AG04450 (cell line): ENCODE measurements at regions of chr17 and their contacts with region 1.

Region 1: DNA sequence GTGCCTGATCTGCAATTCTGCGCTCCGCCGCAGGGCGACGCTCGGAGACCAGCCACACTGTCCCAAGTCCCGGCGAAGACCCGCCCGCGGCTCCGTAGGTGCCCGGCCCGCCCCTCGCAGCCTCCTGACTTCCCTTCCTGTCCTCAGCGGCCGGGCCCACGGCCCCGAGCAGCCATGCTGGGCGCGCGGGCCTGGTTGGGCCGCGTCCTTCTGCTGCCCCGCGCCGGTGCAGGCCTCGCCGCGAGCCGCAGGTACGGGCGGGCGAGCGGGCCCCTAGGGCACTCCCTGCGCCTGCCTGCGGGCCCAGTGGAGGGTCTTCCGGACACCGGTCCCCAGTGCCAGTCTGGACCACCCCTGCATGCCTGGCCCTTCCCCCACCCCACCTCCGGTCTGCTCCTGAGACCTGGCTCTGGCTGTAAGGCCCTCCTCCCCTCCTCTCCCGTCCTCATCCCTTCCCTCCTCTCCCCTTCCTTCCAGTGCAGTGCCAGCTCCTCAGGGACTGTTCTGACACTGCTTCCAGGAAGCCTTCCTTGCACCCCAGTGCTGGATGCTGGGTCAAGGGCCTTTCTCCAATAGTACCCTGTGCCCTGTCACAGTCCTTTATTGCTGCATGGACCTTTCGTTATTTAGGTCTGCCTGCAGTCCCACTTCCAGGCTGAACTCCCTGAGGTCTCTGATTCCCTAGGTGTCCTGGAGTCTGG is at the start of gene SPATA20:
- DNase-seq: peak; percentile 63
- H3K4me3 ChIP-seq: peak within 1 kb of the TSS; percentile 73
- H3K27ac ChIP-seq: no peak within 1 kb of the TSS
- H3K27me3 ChIP-seq: no peaks in the 10 kb centered on the region
- CTCF ChIP-seq: peak; percentile 95
- polyA plus RNA-seq, gene SPATA20: 17.1 and 25.1 TPM in 2 replicates

Region 2: GRCh38 chr17:50560185-50560824 is 13.1 kb after region 1 on chr17 and contains the start of gene CACNA1G:
- CTCF ChIA-PET with region 1: interaction called, 19 read pairs
- POLR2A ChIA-PET with region 1: interaction called, 6 read pairs
- DNase-seq: peak; percentile 26
- H3K4me3 ChIP-seq: peak within 1 kb of the TSS; percentile 47
- H3K27ac ChIP-seq: no peak within 1 kb of the TSS
- H3K27me3 ChIP-seq: peaks cover 64% of the 10 kb centered on the region
- CTCF ChIP-seq: no peak
- polyA plus RNA-seq, gene CACNA1G: 0.05 TPM in 1 of 2 replicates, not detected in the other

Region 3: DNA sequence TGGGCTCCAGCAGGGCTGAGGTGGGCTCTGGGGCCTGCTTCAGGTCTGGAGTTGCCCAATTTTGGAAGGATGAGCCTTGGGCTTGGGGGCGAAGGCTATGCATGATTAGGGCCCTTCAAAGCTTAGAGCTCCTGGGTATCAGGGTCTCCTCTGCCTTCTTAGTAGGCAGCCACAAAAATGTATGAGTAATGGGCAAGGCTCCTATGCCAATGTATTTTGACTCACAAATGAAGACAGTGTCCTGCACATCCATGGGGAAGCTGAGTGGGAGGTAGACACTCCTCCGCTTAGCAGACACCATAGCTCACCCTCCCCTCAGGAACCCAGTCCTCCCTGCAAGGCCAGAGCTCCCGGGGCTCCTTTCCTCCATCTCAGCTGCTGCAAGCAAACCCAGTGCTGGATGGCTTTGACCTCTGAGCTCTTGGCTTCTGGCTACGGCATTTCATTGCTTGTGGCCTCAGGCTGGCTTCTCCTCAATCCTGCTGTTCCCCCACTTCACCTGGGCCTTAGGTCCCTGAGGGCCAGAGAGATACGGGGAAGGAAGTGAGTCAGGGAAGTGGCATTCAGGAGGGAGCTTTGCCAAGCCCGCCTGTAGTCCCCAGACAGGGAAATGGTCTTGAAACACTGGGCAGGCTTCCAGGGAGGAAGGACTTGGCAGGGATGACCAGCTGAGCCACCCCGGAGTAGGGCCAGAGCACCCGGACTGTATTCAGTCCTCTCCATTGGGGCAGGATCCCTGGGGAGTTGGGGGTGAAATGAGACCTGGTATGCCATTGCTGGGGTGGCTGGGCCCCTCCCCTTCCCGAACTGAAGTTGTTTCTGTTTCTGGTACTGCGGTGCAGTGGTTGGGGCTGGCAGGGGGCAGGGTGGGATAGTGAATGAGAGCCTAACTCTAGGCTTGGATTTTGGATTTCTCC is 91.9 kb after region 1 on chr17:
- CTCF ChIA-PET with region 1: interaction called, 15 read pairs
- POLR2A ChIA-PET with region 1: interaction called, 4 read pairs
- DNase-seq: peak; percentile 89
- H3K4me3 ChIP-seq: 0 out of 2 replicates have a peak overlapping the region, but pooled peaks have one; percentile 13
- H3K27ac ChIP-seq: peak overlapping the region; percentile 92
- H3K27me3 ChIP-seq: no peaks in the 10 kb centered on the region
- CTCF ChIP-seq: no peak

Region 4: DNA sequence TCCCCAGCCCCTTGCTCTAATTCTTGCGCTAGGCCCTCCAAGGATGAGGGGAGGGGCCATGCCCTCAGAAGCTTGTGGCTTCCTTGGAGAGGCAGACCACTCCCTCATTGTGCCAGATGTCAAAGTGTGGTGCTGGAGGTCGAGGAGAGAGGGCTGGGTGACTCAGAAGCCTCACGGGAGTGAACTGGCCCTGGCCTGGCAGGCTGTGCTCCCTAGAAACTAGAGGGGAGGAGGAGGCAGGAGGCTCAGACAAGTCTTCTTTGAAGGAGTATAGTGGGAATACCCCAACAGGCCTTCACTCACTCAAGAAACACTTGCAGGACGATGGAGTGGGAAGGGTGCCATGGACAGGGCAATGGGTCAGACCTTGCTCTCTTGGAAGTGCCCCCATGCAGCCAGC is 142.1 kb after region 1 on chr17:
- CTCF ChIA-PET with region 1: interaction called, 192 read pairs
- POLR2A ChIA-PET with region 1: no interaction called
- DNase-seq: no peak
- H3K4me3 ChIP-seq: no peak overlapping the region
- H3K27ac ChIP-seq: peak overlapping the region; percentile 52
- H3K27me3 ChIP-seq: no peaks in the 10 kb centered on the region
- CTCF ChIP-seq: no peak

Region 5: DNA sequence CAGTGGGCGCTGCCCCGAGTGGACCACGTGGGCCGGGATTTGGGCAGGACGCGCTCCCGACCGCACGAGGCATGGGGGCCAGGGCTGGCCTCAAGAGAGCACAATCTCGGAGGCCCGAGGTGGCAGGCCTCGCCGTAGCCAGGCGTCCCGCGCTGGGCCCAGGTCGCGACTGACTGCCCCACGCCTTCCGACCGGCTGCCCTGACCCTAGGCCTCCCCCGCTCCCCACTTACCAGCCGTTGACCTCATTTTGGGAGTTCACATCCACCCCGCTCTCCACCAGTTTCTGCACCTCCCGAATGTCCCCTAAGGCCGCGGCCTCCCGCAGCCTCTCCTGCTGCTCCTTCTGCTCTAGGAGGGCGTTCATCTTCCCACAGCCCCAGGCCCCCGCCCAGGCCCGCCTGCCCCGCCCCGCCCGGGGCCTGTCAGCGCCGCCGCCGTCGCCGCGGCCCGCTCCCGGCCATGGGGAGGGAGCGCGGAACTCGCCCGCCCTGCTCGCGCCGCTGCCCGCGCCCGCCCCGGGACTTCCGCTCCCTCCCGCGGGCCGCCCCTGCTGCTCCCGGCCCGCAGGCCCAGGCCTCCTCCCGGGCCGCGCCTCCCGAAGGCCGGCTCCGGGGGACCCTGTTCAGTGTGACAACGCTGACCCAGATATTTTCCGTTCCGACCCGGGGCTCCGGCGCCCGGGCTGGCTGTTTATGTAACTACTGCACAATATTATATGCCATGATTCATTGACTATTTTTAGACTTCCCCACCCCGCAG is 160.3 kb after region 1 on chr17 and contains the start of gene ANKRD40:
- CTCF ChIA-PET with region 1: interaction called, 34 read pairs
- POLR2A ChIA-PET with region 1: interaction called, 10 read pairs
- DNase-seq: peak; percentile 79
- H3K4me3 ChIP-seq: peak within 1 kb of the TSS; percentile 89
- H3K27ac ChIP-seq: peak within 1 kb of the TSS; percentile 93
- H3K27me3 ChIP-seq: no peaks in the 10 kb centered on the region
- CTCF ChIP-seq: no peak
- polyA plus RNA-seq, gene ANKRD40: 32.8 and 39.8 TPM in 2 replicates